ENCODE measurements at regions of chr1 and their contacts with region 1.

Region 1: DNA sequence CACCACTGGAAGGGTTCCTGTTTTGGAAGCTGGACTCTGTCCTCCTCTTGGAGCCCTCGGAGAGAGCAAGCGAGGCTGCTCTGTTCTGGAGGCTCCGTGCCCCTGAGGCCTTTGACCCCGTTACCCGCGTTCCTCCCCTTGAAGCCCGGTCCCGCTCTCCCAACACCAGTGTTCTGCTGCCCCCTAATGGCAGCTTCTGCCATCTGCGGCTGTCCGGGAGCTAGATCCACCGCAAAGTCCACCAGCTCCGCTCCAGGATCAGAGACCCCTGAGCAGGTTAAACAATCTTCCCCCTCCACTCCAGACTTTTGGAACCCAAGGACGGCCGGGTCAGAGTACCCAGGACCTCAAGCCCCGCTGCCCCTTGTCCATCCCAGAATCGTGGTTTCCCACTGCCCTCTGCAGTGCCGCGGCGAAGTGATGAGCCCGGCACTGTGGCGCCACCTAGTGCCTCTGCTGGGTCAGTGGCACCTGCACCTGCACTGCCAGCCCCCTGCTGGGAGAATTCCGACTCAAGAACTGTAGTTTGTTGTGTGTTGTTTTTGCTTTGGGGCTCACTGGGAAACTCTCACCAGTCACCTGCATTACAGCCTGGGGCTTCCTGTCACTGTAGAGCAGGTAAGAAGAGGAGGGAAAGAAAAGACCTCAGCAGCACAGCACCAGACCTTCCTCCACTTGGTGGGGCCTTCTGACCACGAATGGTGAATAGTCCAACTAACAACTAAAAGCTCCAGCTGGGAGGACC is 63.5 kb upstream of the NFASC start:
- DNase-seq: peak; percentile 85
- H3K4me3 Mint-ChIP-seq: peak overlapping the region; percentile 82
- H3K27ac Mint-ChIP-seq: peak overlapping the region; percentile 53
- H3K4me1 Mint-ChIP-seq: peaks cover 16% of the 10 kb centered on the region
- H3K27me3 Mint-ChIP-seq: peaks cover 9% of the 10 kb centered on the region

Region 2: GRCh38 chr1:204494281-204495077 is 312.6 kb before region 1 on chr1 and contains the start of gene PIK3C2B:
- CTCF ChIA-PET with region 1: interaction called, 14 read pairs
- POLR2A ChIA-PET with region 1: no interaction called
- DNase-seq: peak; percentile 77
- H3K4me3 Mint-ChIP-seq: peak within 1 kb of the TSS; percentile 88
- H3K27ac Mint-ChIP-seq: peak within 1 kb of the TSS; percentile 84
- H3K4me1 Mint-ChIP-seq: peaks cover 58% of the 10 kb centered on the region
- H3K27me3 Mint-ChIP-seq: no peaks in the 10 kb centered on the region
- total RNA-seq, gene PIK3C2B: 31.0 to 32.0 TPM

Region 3: GRCh38 chr1:204523605-204524215 is 283.4 kb before region 1 on chr1:
- CTCF ChIA-PET with region 1: interaction called, 11 read pairs
- POLR2A ChIA-PET with region 1: no interaction called
- DNase-seq: no peak
- H3K4me3 Mint-ChIP-seq: no peak overlapping the region
- H3K27ac Mint-ChIP-seq: peak overlapping the region; percentile 7
- H3K4me1 Mint-ChIP-seq: peaks cover 42% of the 10 kb centered on the region
- H3K27me3 Mint-ChIP-seq: no peaks in the 10 kb centered on the region

Region 4: DNA sequence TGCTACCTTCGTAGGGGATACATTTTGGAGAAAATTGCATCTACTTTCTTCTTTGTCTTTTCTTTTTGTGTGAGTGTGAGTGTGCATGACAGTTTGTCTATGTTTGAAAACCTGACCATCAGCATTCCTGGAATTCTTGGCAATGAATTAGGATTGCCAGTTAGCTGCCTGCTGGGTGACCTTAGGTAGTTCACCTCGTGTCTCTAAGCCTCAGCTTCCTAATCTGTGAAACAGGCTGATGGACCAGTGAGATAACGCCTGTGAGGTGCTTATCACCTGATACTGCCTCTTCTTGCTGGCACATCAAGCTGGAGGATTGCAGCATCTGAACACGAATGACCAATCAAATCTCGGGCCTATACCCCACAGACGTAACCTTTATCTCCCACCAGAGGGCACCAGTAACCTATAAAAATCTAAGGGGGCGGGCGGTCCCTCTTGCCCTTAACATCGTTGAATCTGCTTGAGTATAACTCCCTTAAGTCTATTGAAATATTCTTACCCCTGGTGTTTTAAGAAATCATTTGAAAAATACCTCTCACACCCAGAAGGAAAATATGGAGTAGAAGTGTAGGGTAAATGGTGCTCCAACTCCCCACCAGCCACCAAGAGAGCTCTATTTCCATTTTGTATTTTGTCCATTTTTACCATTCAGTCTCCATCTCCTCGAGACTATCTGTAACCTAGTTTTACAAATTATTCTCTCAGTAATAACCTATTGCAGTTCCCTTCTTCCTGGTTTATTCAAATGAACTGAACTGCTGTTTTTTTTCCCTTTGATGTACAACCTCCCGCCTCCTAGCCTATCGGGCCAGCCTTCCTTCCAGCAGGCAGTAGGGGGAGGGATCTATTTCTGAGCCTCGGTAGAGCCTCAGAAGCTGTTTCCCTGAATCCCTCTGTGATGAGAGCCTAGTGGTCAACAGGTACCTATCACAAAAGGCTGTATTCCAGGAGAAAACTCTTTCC is 241.2 kb before region 1 on chr1:
- CTCF ChIA-PET with region 1: interaction called, 144 read pairs
- POLR2A ChIA-PET with region 1: interaction called, 11 read pairs
- DNase-seq: peak; percentile 67
- H3K4me3 Mint-ChIP-seq: no peak overlapping the region
- H3K27ac Mint-ChIP-seq: peak overlapping the region; percentile 73
- H3K4me1 Mint-ChIP-seq: peaks cover 51% of the 10 kb centered on the region
- H3K27me3 Mint-ChIP-seq: no peaks in the 10 kb centered on the region

Region 5: GRCh38 chr1:204623894-204624361 is 183.2 kb before region 1 on chr1:
- CTCF ChIA-PET with region 1: interaction called, 12 read pairs
- POLR2A ChIA-PET with region 1: no interaction called
- DNase-seq: peak; percentile 24
- H3K4me3 Mint-ChIP-seq: no peak overlapping the region
- H3K27ac Mint-ChIP-seq: no peak overlapping the region
- H3K4me1 Mint-ChIP-seq: no peaks in the 10 kb centered on the region
- H3K27me3 Mint-ChIP-seq: no peaks in the 10 kb centered on the region

Region 6: DNA sequence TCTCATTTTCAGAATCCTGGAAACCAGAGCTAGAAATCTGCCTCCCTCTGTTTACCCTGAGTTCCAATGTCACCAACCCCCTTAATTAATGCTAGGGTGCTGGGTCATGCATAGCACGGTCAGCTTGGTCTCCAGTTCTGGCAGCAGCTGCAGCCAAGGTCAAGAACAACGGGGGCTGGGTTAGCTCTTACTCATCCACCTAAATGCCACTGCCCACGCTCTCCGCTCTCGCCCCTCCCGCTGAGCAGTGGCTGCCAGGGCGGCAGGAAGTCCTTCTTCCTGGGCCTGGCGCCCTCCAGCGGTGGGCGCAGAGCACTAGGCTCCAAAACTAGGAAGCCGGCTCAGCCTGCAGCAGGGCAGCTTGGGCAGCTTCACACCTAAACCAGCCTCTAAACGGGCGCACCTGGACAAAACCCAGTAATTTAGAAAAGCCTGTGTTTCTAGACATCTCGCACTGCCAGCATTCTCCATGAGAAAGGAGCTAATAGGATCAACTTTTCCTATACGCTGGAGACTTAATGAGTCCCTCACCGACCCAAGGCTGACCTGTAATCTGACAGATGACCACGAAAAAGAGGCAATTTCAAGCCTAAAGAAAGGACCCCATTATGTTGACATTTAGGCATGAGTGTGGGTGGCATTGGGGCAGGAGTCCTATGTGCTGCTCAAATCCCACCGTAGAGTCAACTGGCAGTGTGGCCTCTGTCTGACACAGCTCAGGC is 43.2 kb before region 1 on chr1:
- CTCF ChIA-PET with region 1: interaction called, 17 read pairs
- POLR2A ChIA-PET with region 1: interaction called, 3 read pairs
- DNase-seq: peak; percentile 77
- H3K4me3 Mint-ChIP-seq: no peak overlapping the region
- H3K27ac Mint-ChIP-seq: no peak overlapping the region
- H3K4me1 Mint-ChIP-seq: peaks cover 10% of the 10 kb centered on the region
- H3K27me3 Mint-ChIP-seq: peaks cover 41% of the 10 kb centered on the region

Region 7: DNA sequence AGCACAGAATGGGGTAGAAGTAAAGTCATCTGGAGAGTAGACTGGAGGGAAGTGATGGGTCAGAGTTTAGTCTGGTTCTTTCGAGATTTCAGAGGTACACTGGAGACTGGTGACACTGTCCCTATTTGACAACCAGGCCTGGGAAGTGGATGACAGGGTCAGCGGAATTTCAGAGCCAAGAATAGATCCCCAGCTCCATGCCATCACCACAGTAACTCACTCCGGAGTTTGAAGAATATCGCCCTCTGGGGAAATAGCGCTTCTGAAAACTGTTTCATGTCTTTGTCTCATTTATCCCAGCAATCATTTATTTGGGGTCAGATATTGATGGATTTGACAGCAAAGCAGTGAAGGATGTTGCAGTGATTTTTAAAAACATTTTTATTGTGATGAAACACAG is 55.9 kb after region 1 on chr1:
- CTCF ChIA-PET with region 1: no interaction called
- POLR2A ChIA-PET with region 1: no interaction called
- DNase-seq: no peak
- H3K4me3 Mint-ChIP-seq: no peak overlapping the region
- H3K27ac Mint-ChIP-seq: no peak overlapping the region
- H3K4me1 Mint-ChIP-seq: no peaks in the 10 kb centered on the region
- H3K27me3 Mint-ChIP-seq: peaks cover 35% of the 10 kb centered on the region

Region 8: DNA sequence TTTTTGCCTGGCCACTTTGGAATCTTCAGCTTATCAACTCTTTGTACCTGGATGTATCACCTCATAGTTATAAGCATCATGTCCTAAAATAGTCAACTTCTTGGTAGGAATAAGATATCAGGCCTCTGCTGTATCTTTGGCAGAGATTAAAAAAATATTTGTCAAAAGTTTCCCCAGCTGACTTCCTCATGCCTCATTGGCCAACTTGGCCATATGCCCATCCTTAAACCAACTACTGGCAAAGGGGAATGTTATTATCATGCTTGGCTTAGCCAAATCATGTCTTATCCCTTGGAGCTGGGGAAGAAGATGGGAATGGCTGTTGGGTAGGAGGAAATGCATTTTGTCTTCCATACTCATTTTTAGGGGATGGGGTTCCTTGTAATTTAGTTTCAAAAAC is 86.9 kb after region 1 on chr1:
- CTCF ChIA-PET with region 1: no interaction called
- POLR2A ChIA-PET with region 1: no interaction called
- DNase-seq: no peak
- H3K4me3 Mint-ChIP-seq: no peak overlapping the region
- H3K27ac Mint-ChIP-seq: no peak overlapping the region
- H3K4me1 Mint-ChIP-seq: no peaks in the 10 kb centered on the region
- H3K27me3 Mint-ChIP-seq: peaks cover 42% of the 10 kb centered on the region